ENCODE measurements at regions of chr1 and their contacts with region 1.

Region 1: GRCh38 chr1:113811888-113812660 is at the start of gene RSBN1:
- DNase-seq: peak; percentile 98 to 100 (median 99)
- H3K4me3 ChIP-seq: peak within 1 kb of the TSS; percentile 96 to 97
- H3K4me3 Mint-ChIP-seq: peak within 1 kb of the TSS; percentile 96 to 100 (median 99)
- H3K27ac ChIP-seq: peak within 1 kb of the TSS; percentile 93
- H3K27ac Mint-ChIP-seq: peak within 1 kb of the TSS; percentile 96 to 100 (median 99)
- H3K4me1 ChIP-seq: peaks cover 36% of the 10 kb centered on the region
- H3K4me1 Mint-ChIP-seq: peaks cover 22 to 45% (median 29%) of the 10 kb centered on the region in 4 donors
- H3K27me3 ChIP-seq: no peaks in the 10 kb centered on the region
- H3K27me3 Mint-ChIP-seq: no peaks in the 10 kb centered on the region
- total RNA-seq, gene RSBN1: 58.7 to 60.2 TPM

Region 2: GRCh38 chr1:112619520-112620376 is 1192.3 kb before region 1 on chr1 and contains the start of gene CAPZA1:
- CTCF ChIA-PET with region 1: no interaction called
- POLR2A ChIA-PET with region 1: no interaction called
- intact Hi-C with region 1: loop called (anchors 5 kb)
- DNase-seq: peak; percentile 92 to 94 (median 94)
- H3K4me3 ChIP-seq: peak within 1 kb of the TSS; percentile 83 to 98
- H3K4me3 Mint-ChIP-seq: peak within 1 kb of the TSS; percentile 94 to 100 (median 99)
- H3K27ac ChIP-seq: peak within 1 kb of the TSS; percentile 100
- H3K27ac Mint-ChIP-seq: peak within 1 kb of the TSS; percentile 96 to 100 (median 100)
- H3K4me1 ChIP-seq: peaks cover 55% of the 10 kb centered on the region
- H3K4me1 Mint-ChIP-seq: peaks cover 27 to 71% (median 40%) of the 10 kb centered on the region in 4 donors
- H3K27me3 ChIP-seq: no peaks in the 10 kb centered on the region
- H3K27me3 Mint-ChIP-seq: no peaks in the 10 kb centered on the region
- total RNA-seq, gene CAPZA1: 149 to 157 TPM

Region 3: DNA sequence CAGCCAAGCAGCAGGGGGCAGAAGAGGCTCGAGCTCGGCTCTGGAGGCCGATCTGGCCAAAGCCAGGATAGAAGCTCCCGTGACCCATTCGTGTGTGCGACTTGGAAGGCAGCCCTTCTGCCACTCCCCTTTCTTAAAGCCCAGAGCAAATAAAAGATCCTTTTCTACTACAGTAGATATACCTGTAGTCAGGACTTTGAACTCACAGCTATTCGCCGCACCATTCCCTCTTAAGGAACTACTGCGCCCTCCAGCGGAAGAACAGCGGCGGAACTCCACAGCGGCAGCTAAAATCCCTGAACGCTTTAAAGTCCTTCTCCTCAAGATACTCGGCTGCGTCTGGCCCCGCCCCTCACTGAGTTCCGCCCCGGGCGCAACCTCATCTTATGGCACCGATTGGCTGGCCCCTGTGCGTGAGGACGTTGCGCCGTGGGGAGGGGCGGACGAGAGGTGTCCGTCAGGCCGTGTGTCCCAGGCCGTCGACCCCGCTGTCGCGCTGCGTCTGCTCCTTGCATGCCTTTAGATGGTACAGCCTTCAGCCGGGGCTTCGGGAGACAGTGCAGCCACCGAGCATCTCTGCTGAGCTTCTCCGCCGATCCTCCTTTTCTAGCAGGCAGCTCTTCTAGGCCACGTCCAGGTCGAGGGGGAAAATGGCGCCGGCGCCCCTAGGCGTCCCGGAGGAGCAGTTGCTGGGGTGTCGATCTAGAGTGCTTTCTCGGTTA is 739.2 kb before region 1 on chr1 and contains the start of gene LRIG2:
- CTCF ChIA-PET with region 1: interaction called, 4 read pairs
- POLR2A ChIA-PET with region 1: interaction called, 6 read pairs
- intact Hi-C with region 1: loop called (anchors 2 kb)
- DNase-seq: peak; percentile 95 to 99 (median 96)
- H3K4me3 ChIP-seq: peak within 1 kb of the TSS; percentile 85 to 95
- H3K4me3 Mint-ChIP-seq: peak within 1 kb of the TSS; percentile 97 to 99 (median 98)
- H3K27ac ChIP-seq: peak within 1 kb of the TSS; percentile 80
- H3K27ac Mint-ChIP-seq: peak within 1 kb of the TSS; percentile 95 to 99 (median 97)
- H3K4me1 ChIP-seq: peaks cover 35% of the 10 kb centered on the region
- H3K4me1 Mint-ChIP-seq: peaks cover 15 to 54% (median 29%) of the 10 kb centered on the region in 4 donors
- H3K27me3 ChIP-seq: no peaks in the 10 kb centered on the region
- H3K27me3 Mint-ChIP-seq: peaks cover 0 to 1% of the 10 kb centered on the region in 2 donors
- total RNA-seq, gene LRIG2: 24.2 to 27.9 TPM

Region 4: GRCh38 chr1:113701429-113701828 is 110.6 kb before region 1 on chr1:
- CTCF ChIA-PET with region 1: no interaction called
- POLR2A ChIA-PET with region 1: interaction called, 4 read pairs
- intact Hi-C with region 1: loop called (anchors 5 kb)
- DNase-seq: no peak
- H3K4me3 ChIP-seq: no peak overlapping the region
- H3K4me3 Mint-ChIP-seq: peak overlapping the region in 2 of 8 donors; percentile 14 to 72
- H3K27ac ChIP-seq: no peak overlapping the region
- H3K27ac Mint-ChIP-seq: peak overlapping the region in 2 of 7 donors; percentile 19 to 49
- H3K4me1 ChIP-seq: no peaks in the 10 kb centered on the region
- H3K4me1 Mint-ChIP-seq: peaks cover 6 to 9% (median 7%) of the 10 kb centered on the region in 4 donors
- H3K27me3 ChIP-seq: no peaks in the 10 kb centered on the region
- H3K27me3 Mint-ChIP-seq: no peaks in the 10 kb centered on the region

Region 5: DNA sequence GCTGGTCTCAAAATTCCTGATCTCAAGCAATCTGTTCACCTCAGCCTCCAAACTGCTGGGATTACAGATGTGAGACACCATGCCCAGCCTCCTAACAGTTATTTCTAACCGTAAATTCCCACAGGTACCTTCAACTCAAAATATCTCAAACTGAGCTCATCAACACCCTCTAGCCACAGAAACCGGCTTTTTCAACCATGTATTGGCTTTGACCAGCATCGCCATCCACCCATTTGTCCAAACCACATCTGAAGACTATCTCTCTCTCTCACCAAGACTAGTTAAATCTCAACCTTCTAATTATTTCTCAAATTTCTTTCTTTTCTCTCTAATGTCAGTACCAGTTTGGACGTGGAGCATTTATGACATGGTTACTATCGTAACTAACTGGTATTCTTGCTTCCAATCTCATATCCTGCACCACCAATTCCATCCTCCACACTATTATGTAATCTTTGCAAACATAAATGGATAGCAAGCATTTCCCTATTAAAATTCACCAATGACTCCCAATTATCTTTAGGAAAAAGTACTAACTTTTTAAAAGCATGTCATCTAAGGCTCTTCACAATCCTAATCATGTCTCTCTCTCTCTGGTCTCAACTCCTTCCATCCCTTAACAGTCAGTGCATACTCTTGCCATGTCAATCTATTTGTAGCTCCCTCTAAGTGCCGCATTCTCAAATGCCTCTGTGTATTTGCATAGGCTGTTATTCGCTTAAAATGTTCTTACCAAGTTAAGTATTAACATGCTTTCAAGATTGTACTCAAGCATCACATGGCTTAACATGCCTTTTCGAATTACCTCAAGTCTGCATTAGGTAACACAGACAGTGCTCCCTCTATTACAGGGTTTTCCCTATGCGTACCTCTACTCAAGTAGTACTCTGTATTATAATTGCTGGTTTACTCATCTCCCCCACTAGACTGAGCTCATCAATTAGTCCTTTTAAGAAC is 17.9 kb before region 1 on chr1:
- CTCF ChIA-PET with region 1: interaction called, 3 read pairs
- POLR2A ChIA-PET with region 1: interaction called, 37 read pairs
- intact Hi-C with region 1: loop called (anchors 2 kb)
- DNase-seq: no peak
- H3K4me3 ChIP-seq: no peak overlapping the region
- H3K4me3 Mint-ChIP-seq: peak overlapping the region in 5 of 8 donors; percentile 1 to 35 (median 19)
- H3K27ac ChIP-seq: no peak overlapping the region
- H3K27ac Mint-ChIP-seq: peak overlapping the region in 6 of 7 donors; percentile 18 to 86 (median 60)
- H3K4me1 ChIP-seq: peaks cover 56% of the 10 kb centered on the region
- H3K4me1 Mint-ChIP-seq: peaks cover 47 to 84% (median 60%) of the 10 kb centered on the region in 4 donors
- H3K27me3 ChIP-seq: no peaks in the 10 kb centered on the region
- H3K27me3 Mint-ChIP-seq: no peaks in the 10 kb centered on the region

Region 6: GRCh38 chr1:113928941-113929749 is 117.1 kb after region 1 on chr1 and contains the start of gene HIPK1:
- CTCF ChIA-PET with region 1: interaction called, 10 read pairs
- POLR2A ChIA-PET with region 1: interaction called, 53 read pairs
- intact Hi-C with region 1: loop called (anchors 1 kb)
- DNase-seq: peak; percentile 92 to 94 (median 93)
- H3K4me3 ChIP-seq: peak within 1 kb of the TSS; percentile 79 to 98
- H3K4me3 Mint-ChIP-seq: peak within 1 kb of the TSS; percentile 96 to 99 (median 98)
- H3K27ac ChIP-seq: peak within 1 kb of the TSS; percentile 97
- H3K27ac Mint-ChIP-seq: peak within 1 kb of the TSS; percentile 97 to 100 (median 100)
- H3K4me1 ChIP-seq: peaks cover 42% of the 10 kb centered on the region
- H3K4me1 Mint-ChIP-seq: peaks cover 34 to 59% (median 47%) of the 10 kb centered on the region in 4 donors
- H3K27me3 ChIP-seq: no peaks in the 10 kb centered on the region
- H3K27me3 Mint-ChIP-seq: no peaks in the 10 kb centered on the region
- total RNA-seq, gene HIPK1: 107 to 110 TPM

Region 7: DNA sequence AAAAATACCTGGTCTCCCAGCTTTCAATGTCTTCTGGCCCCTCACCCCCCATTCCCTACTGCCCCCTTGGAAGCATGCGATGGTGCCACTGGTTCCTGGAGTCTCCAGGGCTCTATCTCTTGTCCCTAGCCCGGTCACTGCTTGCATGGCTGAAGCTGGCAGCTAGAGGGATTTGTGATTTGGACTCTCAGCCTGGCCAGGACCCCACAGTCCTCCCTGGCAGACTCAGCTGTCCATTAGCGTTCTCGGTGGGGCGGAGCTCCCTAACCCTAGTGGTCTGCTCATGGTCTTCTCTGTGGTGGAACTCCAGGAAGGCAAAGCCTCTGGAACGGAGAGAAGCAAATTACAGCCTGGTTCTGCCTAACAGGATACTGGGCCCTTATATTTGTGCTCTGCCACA is 241.5 kb after region 1 on chr1:
- CTCF ChIA-PET with region 1: no interaction called
- POLR2A ChIA-PET with region 1: no interaction called
- intact Hi-C with region 1: no loop called
- DNase-seq: no peak
- H3K4me3 ChIP-seq: no peak overlapping the region
- H3K4me3 Mint-ChIP-seq: no peak overlapping the region
- H3K27ac ChIP-seq: no peak overlapping the region
- H3K27ac Mint-ChIP-seq: no peak overlapping the region
- H3K4me1 ChIP-seq: no peaks in the 10 kb centered on the region
- H3K4me1 Mint-ChIP-seq: no peaks in the 10 kb centered on the region
- H3K27me3 ChIP-seq: no peaks in the 10 kb centered on the region
- H3K27me3 Mint-ChIP-seq: peaks cover 1 to 4% of the 10 kb centered on the region in 2 donors

Region 8: DNA sequence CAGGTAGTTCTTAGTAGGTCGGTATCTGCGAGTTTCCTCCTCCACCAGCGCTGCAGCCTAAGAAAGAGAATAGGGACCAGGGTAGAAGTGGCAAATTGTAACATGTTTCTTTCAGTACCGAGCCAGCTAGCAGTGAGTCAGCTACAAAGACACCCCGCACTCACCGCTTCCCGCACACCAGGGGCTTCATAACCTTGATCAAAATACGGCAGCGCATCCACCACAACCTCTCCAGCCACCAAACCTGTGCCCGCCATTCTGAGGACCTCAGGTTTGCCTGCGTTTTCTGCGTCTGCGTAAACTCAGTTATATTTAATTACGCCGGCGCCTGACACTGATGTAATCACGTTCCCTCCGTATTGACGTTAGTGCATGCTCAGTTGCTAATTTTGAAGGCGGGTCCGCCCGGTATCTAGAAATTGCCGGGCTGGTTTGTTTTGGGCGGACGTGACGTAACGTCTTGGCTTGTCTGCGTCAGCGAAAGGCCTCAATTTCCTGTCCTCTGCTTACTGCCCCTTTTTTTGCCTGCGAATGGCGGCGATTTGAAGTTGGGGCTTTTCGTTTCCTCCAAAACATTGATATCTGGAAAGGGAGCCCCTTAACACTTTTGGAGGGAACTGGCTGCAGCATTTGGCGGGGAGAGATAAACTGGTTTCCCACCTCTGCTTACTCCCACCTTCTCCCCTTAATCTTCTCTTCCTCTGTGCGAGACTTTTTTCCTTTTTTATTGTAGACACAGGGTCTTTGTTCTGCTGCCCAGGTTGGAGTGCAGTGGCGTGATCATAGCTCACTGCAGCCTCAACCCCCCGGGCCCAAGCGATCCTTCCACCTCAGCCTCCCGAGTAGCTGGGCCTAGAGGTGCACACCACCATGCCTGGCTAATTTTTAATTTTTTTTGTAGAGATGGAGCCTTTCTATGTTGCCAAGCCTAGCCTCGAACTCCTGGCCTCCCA is 769.5 kb after region 1 on chr1 and contains the start of gene BCAS2:
- CTCF ChIA-PET with region 1: no interaction called
- POLR2A ChIA-PET with region 1: interaction called, 3 read pairs
- intact Hi-C with region 1: loop called (anchors 1 kb)
- DNase-seq: peak; percentile 93 to 98 (median 97)
- H3K4me3 ChIP-seq: peak within 1 kb of the TSS; percentile 76 to 80
- H3K4me3 Mint-ChIP-seq: peak within 1 kb of the TSS; percentile 95 to 99 (median 96)
- H3K27ac ChIP-seq: peak within 1 kb of the TSS; percentile 90
- H3K27ac Mint-ChIP-seq: peak within 1 kb of the TSS; percentile 92 to 100 (median 99)
- H3K4me1 ChIP-seq: peaks cover 30% of the 10 kb centered on the region
- H3K4me1 Mint-ChIP-seq: peaks cover 14 to 42% (median 27%) of the 10 kb centered on the region in 4 donors
- H3K27me3 ChIP-seq: no peaks in the 10 kb centered on the region
- H3K27me3 Mint-ChIP-seq: peaks cover 0 to 1% of the 10 kb centered on the region in 2 donors
- total RNA-seq, gene BCAS2: 33.9 to 40.8 TPM